Naive thymus-derived CD4-positive, alpha-beta T cell (primary cell): ENCODE measurements at regions of chr5 and their contacts with region 1.

Region 1: GRCh38 chr5:97183100-97183929 is at the start of gene RIOK2:
- DNase-seq: peak; percentile 77 to 93 (median 91)
- ATAC-seq: peak; percentile 96
- H3K4me3 ChIP-seq: peak within 1 kb of the TSS; percentile 82
- H3K4me3 Mint-ChIP-seq: peak within 1 kb of the TSS; percentile 89 to 98 (median 94)
- H3K27ac ChIP-seq: peak within 1 kb of the TSS; percentile 94
- H3K27ac Mint-ChIP-seq: peak within 1 kb of the TSS; percentile 99 to 100 (median 100)
- H3K4me1 ChIP-seq: peaks cover 4 to 14% of the 10 kb centered on the region in 2 donors
- H3K4me1 Mint-ChIP-seq: peaks cover 23 to 54% (median 44%) of the 10 kb centered on the region in 7 donors
- H3K27me3 ChIP-seq: no peaks in the 10 kb centered on the region
- H3K27me3 Mint-ChIP-seq: peaks cover 0 to 3% (median 0%) of the 10 kb centered on the region in 5 donors
- total RNA-seq, gene RIOK2: 18.8 to 36.0 (median 28.5) TPM

Region 2: GRCh38 chr5:95822542-95823181 is 1360.7 kb before region 1 on chr5 and contains the start of gene GLRX:
- CTCF ChIA-PET with region 1: no interaction called
- POLR2A ChIA-PET with region 1: no interaction called
- intact Hi-C with region 1: loop called (anchors 5 kb)
- DNase-seq: peak in 8 of 9 donors; percentile 48 to 62 (median 58)
- ATAC-seq: peak; percentile 52
- H3K4me3 ChIP-seq: peak within 1 kb of the TSS; percentile 93
- H3K4me3 Mint-ChIP-seq: peak within 1 kb of the TSS; percentile 91 to 100 (median 99)
- H3K27ac ChIP-seq: peak within 1 kb of the TSS; percentile 84
- H3K27ac Mint-ChIP-seq: peak within 1 kb of the TSS; percentile 91 to 97 (median 95)
- H3K4me1 ChIP-seq: peaks cover 38% of the 10 kb centered on the region in 2 donors
- H3K4me1 Mint-ChIP-seq: peaks cover 53 to 78% (median 61%) of the 10 kb centered on the region in 7 donors
- H3K27me3 ChIP-seq: no peaks in the 10 kb centered on the region
- H3K27me3 Mint-ChIP-seq: no peaks in the 10 kb centered on the region
- total RNA-seq, gene GLRX: 26.3 to 89.5 (median 55.6) TPM

Region 3: GRCh38 chr5:96336351-96336985 is 846.8 kb before region 1 on chr5:
- CTCF ChIA-PET with region 1: no interaction called
- POLR2A ChIA-PET with region 1: no interaction called
- intact Hi-C with region 1: no loop called
- DNase-seq: peak in 8 of 9 donors; percentile 41 to 72 (median 65)
- ATAC-seq: peak; percentile 92
- H3K4me3 ChIP-seq: no peak overlapping the region
- H3K4me3 Mint-ChIP-seq: no peak overlapping the region
- H3K27ac ChIP-seq: no peak overlapping the region
- H3K27ac Mint-ChIP-seq: no peak overlapping the region
- H3K4me1 ChIP-seq: no peaks in the 10 kb centered on the region
- H3K4me1 Mint-ChIP-seq: peaks cover 0 to 9% (median 0%) of the 10 kb centered on the region in 7 donors
- H3K27me3 ChIP-seq: no peaks in the 10 kb centered on the region
- H3K27me3 Mint-ChIP-seq: peaks cover 7 to 26% (median 14%) of the 10 kb centered on the region in 5 donors

Region 4: GRCh38 chr5:96876292-96876850 is 306.9 kb before region 1 on chr5 and contains the start of gene ERAP2:
- CTCF ChIA-PET with region 1: no interaction called
- POLR2A ChIA-PET with region 1: no interaction called
- intact Hi-C with region 1: loop called (anchors 1 to 5 kb)
- DNase-seq: peak in 7 of 9 donors; percentile 53 to 73 (median 64)
- ATAC-seq: peak; percentile 79
- H3K4me3 ChIP-seq: peak within 1 kb of the TSS; percentile 85
- H3K4me3 Mint-ChIP-seq: peak within 1 kb of the TSS; percentile 81 to 99 (median 96)
- H3K27ac ChIP-seq: peak within 1 kb of the TSS; percentile 80
- H3K27ac Mint-ChIP-seq: peak within 1 kb of the TSS; percentile 91 to 99 (median 97)
- H3K4me1 ChIP-seq: peaks cover 26 to 56% of the 10 kb centered on the region in 2 donors
- H3K4me1 Mint-ChIP-seq: peaks cover 44 to 76% (median 73%) of the 10 kb centered on the region in 7 donors
- H3K27me3 ChIP-seq: no peaks in the 10 kb centered on the region
- H3K27me3 Mint-ChIP-seq: no peaks in the 10 kb centered on the region
- total RNA-seq, gene ERAP2: 42.5 to 158 (median 97.2) TPM

Region 5: GRCh38 chr5:98292496-98292895 is 1109.2 kb after region 1 on chr5:
- CTCF ChIA-PET with region 1: no interaction called
- POLR2A ChIA-PET with region 1: no interaction called
- intact Hi-C with region 1: no loop called
- DNase-seq: no peak
- ATAC-seq: no peak
- H3K4me3 ChIP-seq: no peak overlapping the region
- H3K4me3 Mint-ChIP-seq: no peak overlapping the region
- H3K27ac ChIP-seq: no peak overlapping the region
- H3K27ac Mint-ChIP-seq: no peak overlapping the region
- H3K4me1 ChIP-seq: no peaks in the 10 kb centered on the region
- H3K4me1 Mint-ChIP-seq: no peaks in the 10 kb centered on the region
- H3K27me3 ChIP-seq: no peaks in the 10 kb centered on the region
- H3K27me3 Mint-ChIP-seq: peaks cover 0 to 14% (median 0%) of the 10 kb centered on the region in 5 donors

Region 6: DNA sequence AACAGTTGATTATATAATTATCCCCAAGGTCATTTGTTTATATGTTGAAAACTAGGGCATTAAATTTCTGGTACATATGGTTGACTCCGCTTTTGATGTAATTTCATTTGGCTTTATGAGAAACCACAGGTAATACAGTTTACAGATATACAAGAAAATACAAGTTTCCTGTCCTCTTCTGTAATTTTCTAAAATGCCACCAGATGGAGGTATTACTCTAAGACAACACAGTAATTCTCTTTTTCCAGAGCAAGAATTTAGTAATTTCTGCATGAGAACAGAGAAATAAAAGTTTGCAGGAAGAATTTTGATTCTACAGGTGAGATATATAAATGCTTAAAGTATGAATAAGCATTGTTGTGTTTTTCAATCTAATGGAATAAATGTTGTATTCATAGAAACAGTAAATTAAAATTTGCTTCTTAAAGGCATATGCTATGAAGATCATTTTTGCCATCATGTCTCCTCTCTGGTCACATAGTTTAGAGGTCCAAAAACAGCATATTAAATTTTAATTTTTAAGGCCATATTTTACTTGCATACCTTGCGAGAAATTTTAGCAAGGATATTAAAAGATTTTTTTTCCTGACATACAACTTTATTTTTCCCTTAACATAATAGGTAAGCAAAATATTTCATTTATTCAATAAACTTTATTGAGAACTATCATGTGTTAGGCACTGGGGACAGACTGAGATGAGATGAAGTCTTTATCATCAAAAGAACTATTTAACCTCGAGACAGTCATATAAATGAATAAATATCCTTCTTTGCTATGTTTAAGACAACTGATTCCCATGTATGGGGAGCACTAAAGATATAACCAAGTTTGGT is 1722.8 kb after region 1 on chr5:
- CTCF ChIA-PET with region 1: no interaction called
- POLR2A ChIA-PET with region 1: no interaction called
- intact Hi-C with region 1: loop called in 1 of 2 experiments (anchors 5 kb)
- DNase-seq: peak in 7 of 9 donors; percentile 32 to 73 (median 64)
- ATAC-seq: peak; percentile 87
- H3K4me3 ChIP-seq: no peak overlapping the region
- H3K4me3 Mint-ChIP-seq: peak overlapping the region in 2 of 10 donors; percentile 2 to 3
- H3K27ac ChIP-seq: peak overlapping the region; percentile 31
- H3K27ac Mint-ChIP-seq: peak overlapping the region in 8 of 9 donors; percentile 1 to 77 (median 34)
- H3K4me1 ChIP-seq: peaks cover 10 to 12% of the 10 kb centered on the region in 2 donors
- H3K4me1 Mint-ChIP-seq: peaks cover 29 to 68% (median 53%) of the 10 kb centered on the region in 7 donors
- H3K27me3 ChIP-seq: no peaks in the 10 kb centered on the region
- H3K27me3 Mint-ChIP-seq: no peaks in the 10 kb centered on the region

Region 7: DNA sequence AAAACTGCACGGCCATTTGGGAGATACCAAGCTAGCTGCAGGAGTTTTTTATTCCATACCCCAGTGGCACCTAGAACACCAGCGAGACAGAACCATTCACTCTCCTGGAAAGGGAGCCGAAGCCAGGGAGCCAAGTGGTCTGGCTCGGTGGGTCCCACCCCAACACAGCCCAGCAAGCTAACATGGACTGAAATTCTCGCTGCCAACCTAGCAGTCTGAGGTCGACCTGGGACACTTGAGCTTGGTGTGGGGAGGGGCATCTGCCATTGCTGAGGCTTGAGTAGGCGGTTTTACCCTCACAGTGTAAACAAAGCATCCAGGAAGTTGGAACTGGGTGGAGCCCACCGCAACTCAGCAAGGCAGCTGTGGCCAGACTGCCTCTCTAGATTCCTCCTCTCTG is 1854.4 kb after region 1 on chr5:
- CTCF ChIA-PET with region 1: no interaction called
- POLR2A ChIA-PET with region 1: no interaction called
- intact Hi-C with region 1: loop called (anchors 2 to 5 kb)
- DNase-seq: peak in 8 of 9 donors; percentile 17 to 84 (median 72)
- ATAC-seq: peak; percentile 77
- H3K4me3 ChIP-seq: peak overlapping the region; percentile 47
- H3K4me3 Mint-ChIP-seq: peak overlapping the region; percentile 7 to 75 (median 64)
- H3K27ac ChIP-seq: peak overlapping the region; percentile 32
- H3K27ac Mint-ChIP-seq: peak overlapping the region; percentile 44 to 96 (median 87)
- H3K4me1 ChIP-seq: peaks cover 30 to 33% of the 10 kb centered on the region in 2 donors
- H3K4me1 Mint-ChIP-seq: peaks cover 34 to 74% (median 53%) of the 10 kb centered on the region in 7 donors
- H3K27me3 ChIP-seq: no peaks in the 10 kb centered on the region
- H3K27me3 Mint-ChIP-seq: peaks cover 0 to 25% (median 0%) of the 10 kb centered on the region in 5 donors